SK-N-SH (cell line): ENCODE measurements at regions of chr5 and their contacts with region 1.

Region 1: DNA sequence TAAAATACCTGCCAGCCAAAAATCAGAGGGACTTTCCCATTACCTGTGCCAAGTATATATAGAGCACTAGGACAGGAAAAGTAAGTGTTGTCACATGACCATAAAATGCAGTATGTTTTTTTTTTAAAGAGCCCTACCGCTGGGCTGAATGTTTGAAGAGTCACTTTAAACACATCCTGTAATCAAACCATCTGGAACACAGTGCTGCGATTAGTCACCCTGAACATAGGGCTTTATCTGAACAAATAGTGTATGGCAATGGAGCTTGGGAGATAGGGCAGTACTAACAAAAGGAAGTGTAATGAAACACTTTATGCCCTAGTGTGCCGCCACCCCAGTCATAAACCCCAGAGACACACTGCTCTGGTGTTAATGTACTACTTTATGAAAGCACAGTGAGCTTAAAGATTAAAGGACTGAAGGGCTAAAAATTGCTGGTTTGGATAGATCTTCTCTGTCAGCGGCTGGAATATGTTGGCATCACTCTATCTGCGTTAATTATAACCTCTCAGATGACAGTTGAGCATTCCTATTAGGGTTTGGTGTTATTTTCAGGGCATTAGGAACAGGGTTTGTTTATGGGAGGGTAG is 90.4 kb downstream of the ZNF608 start:
- DNase-seq: peak; percentile 57
- H3K4me3 ChIP-seq: peak overlapping the region in 1 of 2 experiments; percentile 21; a peak in 2 of 4 replicates
- H3K27ac ChIP-seq: peak overlapping the region; percentile 58 to 89
- H3K4me1 ChIP-seq: peaks cover 43 to 71% of the 10 kb centered on the region in 2 experiments
- H3K27me3 ChIP-seq: no peaks in the 10 kb centered on the region
- CTCF ChIP-seq: no peak
- EP300 ChIP-seq: peak in 1 of 2 experiments; percentile 82; a peak in 3 of 4 replicates
- RAD21 ChIP-seq: peak; percentile 18; the same call in 1 of the 2 replicates

Region 2: GRCh38 chr5:124738681-124739633 is 82.9 kb after region 1 on chr5:
- CTCF ChIA-PET with region 1: interaction called, 3 read pairs
- POLR2A ChIA-PET with region 1: interaction called, 12 read pairs
- DNase-seq: peak; percentile 81
- H3K4me3 ChIP-seq: no peak overlapping the region
- H3K27ac ChIP-seq: peak overlapping the region; percentile 4 to 95; a peak in 2 of 4 replicates
- H3K4me1 ChIP-seq: peaks cover 16 to 55% of the 10 kb centered on the region in 2 experiments; a peak in 3 of 4 replicates
- H3K27me3 ChIP-seq: no peaks in the 10 kb centered on the region
- CTCF ChIP-seq: peak; percentile 40
- EP300 ChIP-seq: peak in 1 of 2 experiments; percentile 86; a peak in 2 of 4 replicates
- RAD21 ChIP-seq: peak; percentile 43